ENCODE measurements at regions of chr11 and their contacts with region 1.

Region 1: DNA sequence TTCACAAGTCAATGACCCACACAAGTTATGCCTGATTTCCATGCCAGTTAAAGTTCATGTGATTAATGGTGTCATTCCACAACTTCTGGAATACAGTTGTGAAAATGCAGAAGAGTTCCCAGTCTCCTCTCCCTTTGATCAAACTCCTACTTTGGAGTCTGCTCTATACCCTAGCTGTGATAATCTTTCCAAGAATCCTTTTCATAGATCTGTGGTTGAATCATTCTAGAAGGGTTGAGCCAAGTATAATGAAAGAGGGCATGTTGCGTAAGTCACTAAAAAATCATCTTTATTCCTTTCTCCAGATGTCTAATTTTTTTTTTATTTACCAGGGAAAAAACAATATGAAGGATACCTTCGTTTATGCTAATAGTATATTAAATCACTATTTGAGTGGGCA is 89.7 kb upstream of the CARD18 start:
- DNase-seq: no peak
- ATAC-seq: no peak
- H3K4me3 ChIP-seq: no peak overlapping the region
- H3K27ac ChIP-seq: no peak overlapping the region
- H3K4me1 ChIP-seq: peaks cover 0 to 14% (median 0%) of the 10 kb centered on the region in 9 donors
- H3K27me3 ChIP-seq: no peaks in the 10 kb centered on the region
- CTCF ChIP-seq: no peak

Region 2: GRCh38 chr11:103881584-103881983 is 1347.7 kb before region 1 on chr11:
- intact Hi-C with region 1: loop called in 1 of 10 experiments (anchors 5 kb)
- DNase-seq: no peak
- ATAC-seq: peak in 3 of 8 donors; percentile 33 to 74 (median 70)
- H3K4me3 ChIP-seq: no peak overlapping the region
- H3K27ac ChIP-seq: peak overlapping the region in 4 of 10 donors; percentile 8 to 61 (median 24)
- H3K4me1 ChIP-seq: peaks cover 0 to 7% (median 0%) of the 10 kb centered on the region in 9 donors
- H3K27me3 ChIP-seq: no peaks in the 10 kb centered on the region
- CTCF ChIP-seq: no peak

Measured in heart right ventricle (tissue), 16 donors.